PC-9 (cell line): ENCODE measurements at regions of chr3 and their contacts with region 1.

Region 1: DNA sequence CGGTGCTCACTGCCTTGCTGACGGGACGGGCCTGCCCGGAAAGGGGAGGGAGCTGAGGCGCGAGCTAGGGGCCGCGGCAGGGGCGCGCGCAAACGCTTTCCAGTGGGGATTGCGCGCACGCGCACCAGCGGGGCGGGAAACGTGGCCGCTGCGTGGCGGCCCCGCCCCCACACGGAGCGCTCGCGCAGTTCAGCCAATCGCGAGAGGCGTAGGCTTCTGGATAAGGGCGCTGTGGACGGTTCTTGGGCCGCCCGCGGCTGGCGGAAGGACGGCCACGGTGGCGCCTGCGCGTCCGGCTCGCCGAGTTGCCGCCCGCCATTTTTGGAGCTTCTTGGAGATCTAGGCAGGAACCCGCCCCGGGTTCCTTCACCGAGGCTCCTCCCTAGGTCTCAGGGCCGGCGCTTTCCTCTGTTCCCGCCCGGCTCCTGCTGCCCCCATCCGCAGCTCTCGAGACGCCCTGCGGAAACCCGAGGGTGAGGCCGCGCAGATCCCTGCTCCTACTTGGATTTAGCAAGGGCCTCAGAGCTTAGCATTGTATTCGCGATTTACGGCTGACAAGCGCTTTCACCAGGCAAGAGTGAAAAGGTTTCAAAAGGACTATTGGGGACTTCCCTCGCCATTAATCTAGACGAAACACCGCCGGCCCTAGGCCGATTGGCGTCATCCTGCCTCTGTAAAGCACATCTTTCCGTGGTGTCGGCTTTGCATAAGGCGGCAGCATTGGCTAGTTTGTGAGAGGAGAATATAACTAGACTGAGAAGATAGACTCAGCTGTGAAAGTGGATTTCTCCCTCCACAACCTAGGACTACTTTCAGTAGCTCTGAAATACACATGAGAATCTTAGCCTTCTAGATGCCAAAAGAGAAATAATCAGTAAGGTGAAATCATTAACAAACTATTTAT is 496 bp upstream of the STAG1 start:
- DNase-seq: peak; percentile 91 to 100
- H3K4me3 ChIP-seq: peak overlapping the region; percentile 94
- H3K27ac ChIP-seq: peak overlapping the region; percentile 90
- H3K4me1 ChIP-seq: peaks cover 36% of the 10 kb centered on the region
- H3K27me3 ChIP-seq: no peaks in the 10 kb centered on the region
- CTCF ChIP-seq: no peak

Region 2: GRCh38 chr3:136250226-136250902 is 502.3 kb before region 1 on chr3 and contains the start of gene PCCB:
- CTCF ChIA-PET with region 1: no interaction called
- POLR2A ChIA-PET with region 1: no interaction called
- intact Hi-C with region 1: loop called (anchors 2 kb)
- DNase-seq: peak; percentile 90 to 97
- H3K4me3 ChIP-seq: peak within 1 kb of the TSS; percentile 51
- H3K27ac ChIP-seq: peak within 1 kb of the TSS; percentile 75
- H3K4me1 ChIP-seq: peaks cover 28% of the 10 kb centered on the region
- H3K27me3 ChIP-seq: no peaks in the 10 kb centered on the region
- CTCF ChIP-seq: peak; percentile 73
- total RNA-seq, gene PCCB: 46.8 and 49.3 TPM in 2 replicates

Region 3: DNA sequence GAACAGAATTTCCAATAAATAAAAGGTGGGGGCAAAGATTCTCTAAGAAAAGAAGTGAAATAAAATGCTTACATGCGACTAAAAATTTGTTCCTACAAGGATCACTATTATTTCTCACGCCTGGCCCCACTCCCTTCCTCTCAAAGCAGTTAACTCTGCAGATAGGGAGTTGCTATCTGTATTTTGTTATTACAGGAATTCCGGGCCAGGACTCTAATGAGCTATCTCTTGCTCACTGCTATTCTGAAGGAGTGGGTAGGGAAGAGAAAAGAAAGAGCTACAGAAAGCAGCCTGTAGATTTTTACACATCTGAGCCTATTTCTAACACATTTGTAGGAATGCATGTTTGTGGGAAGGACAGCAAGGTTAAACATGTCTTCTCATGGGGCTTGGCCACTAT is 362.1 kb before region 1 on chr3:
- CTCF ChIA-PET with region 1: interaction called, 30 read pairs
- POLR2A ChIA-PET with region 1: interaction called, 6 read pairs
- intact Hi-C with region 1: loop called (anchors 1 kb)
- DNase-seq: no peak
- H3K4me3 ChIP-seq: no peak overlapping the region
- H3K27ac ChIP-seq: no peak overlapping the region
- H3K4me1 ChIP-seq: no peaks in the 10 kb centered on the region
- H3K27me3 ChIP-seq: no peaks in the 10 kb centered on the region
- CTCF ChIP-seq: no peak

Region 4: GRCh38 chr3:136624894-136625815 is 127.5 kb before region 1 on chr3:
- CTCF ChIA-PET with region 1: interaction called, 3 read pairs
- POLR2A ChIA-PET with region 1: no interaction called
- intact Hi-C with region 1: loop called (anchors 5 kb)
- DNase-seq: peak; percentile 55 to 92
- H3K4me3 ChIP-seq: no peak overlapping the region
- H3K27ac ChIP-seq: peak overlapping the region; percentile 45; the same call in 1 of the 2 replicates
- H3K4me1 ChIP-seq: peaks cover 53% of the 10 kb centered on the region
- H3K27me3 ChIP-seq: no peaks in the 10 kb centered on the region
- CTCF ChIP-seq: no peak

Region 5: DNA sequence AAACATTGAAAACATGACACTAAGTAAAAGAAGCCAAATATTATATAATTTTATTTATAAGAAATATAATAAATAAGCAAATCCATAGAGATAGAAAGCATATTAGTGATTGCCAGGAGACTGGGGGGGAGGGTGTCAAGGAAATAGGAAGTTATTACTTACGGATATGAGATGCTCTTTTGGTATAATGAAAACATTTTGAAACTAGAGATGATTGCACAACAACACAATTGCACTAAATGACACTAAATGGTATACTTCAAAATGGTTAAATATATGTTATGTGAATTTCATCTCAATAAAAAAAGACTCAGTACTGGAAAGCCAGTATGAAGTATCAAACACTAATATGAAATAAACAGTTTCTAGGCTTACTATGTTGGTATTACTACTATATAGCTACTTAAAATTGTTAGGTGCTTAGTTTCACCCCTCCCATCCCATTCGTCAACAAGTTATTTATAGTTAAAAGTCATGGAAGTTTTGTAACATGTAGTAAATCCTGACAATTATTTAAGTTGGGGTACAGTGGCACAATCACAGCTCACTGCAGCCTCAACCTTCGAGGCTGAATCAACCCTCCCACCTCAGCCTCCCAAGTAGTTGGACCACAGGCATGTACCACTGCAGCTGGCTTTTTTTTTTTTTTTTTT is 44.2 kb before region 1 on chr3:
- CTCF ChIA-PET with region 1: no interaction called
- POLR2A ChIA-PET with region 1: no interaction called
- intact Hi-C with region 1: no loop called
- DNase-seq: no peak
- H3K4me3 ChIP-seq: no peak overlapping the region
- H3K27ac ChIP-seq: no peak overlapping the region
- H3K4me1 ChIP-seq: no peaks in the 10 kb centered on the region
- H3K27me3 ChIP-seq: no peaks in the 10 kb centered on the region
- CTCF ChIP-seq: no peak

Region 6: DNA sequence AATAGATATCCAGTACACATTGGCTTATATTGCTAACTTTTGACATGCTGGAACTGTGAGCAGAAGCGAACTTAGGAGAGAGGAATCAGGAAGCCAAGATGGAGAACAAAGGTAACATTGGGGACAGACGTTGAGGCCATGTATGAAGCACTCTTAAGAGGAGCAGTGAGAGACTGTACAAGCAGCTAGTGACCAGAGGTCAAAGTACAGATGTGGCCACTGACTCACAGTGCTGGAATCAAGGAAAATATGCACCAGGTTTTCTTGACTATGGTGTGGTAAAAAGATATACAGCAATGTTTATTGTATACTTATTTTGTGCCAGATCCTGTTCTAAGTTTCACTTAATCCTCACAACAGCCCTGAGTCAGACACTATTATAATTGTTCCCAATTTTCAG is 203.1 kb after region 1 on chr3:
- CTCF ChIA-PET with region 1: interaction called, 7 read pairs
- POLR2A ChIA-PET with region 1: interaction called, 3 read pairs
- intact Hi-C with region 1: loop called (anchors 5 kb)
- DNase-seq: peak; percentile 57 to 92
- H3K4me3 ChIP-seq: peak overlapping the region; percentile 8; the same call in 1 of the 2 replicates
- H3K27ac ChIP-seq: peak overlapping the region; percentile 86
- H3K4me1 ChIP-seq: peaks cover 73% of the 10 kb centered on the region
- H3K27me3 ChIP-seq: no peaks in the 10 kb centered on the region
- CTCF ChIP-seq: no peak

Region 7: GRCh38 chr3:137946345-137946973 is 1193.8 kb after region 1 on chr3:
- CTCF ChIA-PET with region 1: no interaction called
- POLR2A ChIA-PET with region 1: no interaction called
- intact Hi-C with region 1: loop called (anchors 5 kb)
- DNase-seq: peak; percentile 48 to 58
- H3K4me3 ChIP-seq: no peak overlapping the region
- H3K27ac ChIP-seq: no peak overlapping the region
- H3K4me1 ChIP-seq: no peaks in the 10 kb centered on the region
- H3K27me3 ChIP-seq: 0 out of 2 replicates have a peak, but pooled peaks cover 9% of the 10 kb centered on the region
- CTCF ChIP-seq: peak; percentile 88